ENCODE measurements at regions of chr22 and their contacts with region 1.

Region 1: DNA sequence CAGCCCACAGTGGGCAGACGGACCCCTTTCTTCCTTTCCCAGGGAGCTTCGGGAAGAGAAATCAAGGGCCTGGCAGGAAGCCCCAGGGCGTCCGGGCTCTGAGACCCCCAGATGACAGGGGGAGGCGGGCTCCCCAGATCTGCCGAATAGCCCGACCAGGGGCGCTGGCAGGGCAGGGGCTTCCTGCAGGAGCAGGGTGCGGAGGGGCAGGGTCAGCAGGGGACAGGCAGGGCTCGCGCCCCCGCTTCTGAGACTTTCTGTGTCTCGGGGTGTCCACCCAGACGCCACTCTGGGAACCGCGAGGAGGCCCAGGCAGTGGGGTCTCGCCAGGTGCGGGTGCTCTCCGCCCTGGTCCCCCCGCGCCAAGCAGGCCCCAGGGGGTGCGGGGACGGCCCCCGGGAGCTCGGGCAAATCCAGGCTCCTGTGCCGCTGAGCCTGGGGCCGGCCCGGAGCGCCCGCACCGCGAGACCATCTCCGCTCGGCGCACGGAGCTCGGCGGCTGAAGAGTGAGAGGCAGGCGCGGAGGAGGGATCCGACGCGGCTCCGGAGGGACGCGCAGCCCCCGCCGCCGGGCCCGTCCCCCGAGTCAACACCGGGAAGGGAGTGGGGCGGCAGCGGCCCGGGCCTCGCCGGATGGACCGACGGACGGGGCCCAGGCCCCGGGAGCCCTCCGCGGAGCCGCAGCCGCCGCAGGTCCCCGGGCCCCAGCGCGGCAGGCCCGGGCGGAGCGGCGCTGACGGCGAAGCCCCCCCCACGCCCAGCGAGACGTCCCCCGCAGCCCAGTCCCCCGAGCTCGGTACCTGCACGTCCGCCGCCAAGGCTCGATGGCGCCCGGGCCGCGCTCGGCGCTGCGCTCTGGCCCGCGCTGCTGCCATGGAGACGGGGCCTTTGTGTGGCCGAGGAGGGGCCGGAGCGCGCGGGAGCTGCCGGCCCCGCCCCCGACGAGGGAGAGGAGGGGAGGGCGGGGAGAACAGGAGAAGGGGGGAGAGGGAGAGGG is at the start of gene PLXNB2:
- DNase-seq: peak; percentile 72 to 76
- H3K4me3 ChIP-seq: peak within 1 kb of the TSS; percentile 88
- H3K27ac ChIP-seq: peak within 1 kb of the TSS; percentile 92
- H3K4me1 ChIP-seq: peaks cover 42% of the 10 kb centered on the region
- H3K27me3 ChIP-seq: no peaks in the 10 kb centered on the region
- CTCF ChIP-seq: no peak
- total RNA-seq, gene PLXNB2: 250 and 260 TPM in 2 replicates

Region 2: DNA sequence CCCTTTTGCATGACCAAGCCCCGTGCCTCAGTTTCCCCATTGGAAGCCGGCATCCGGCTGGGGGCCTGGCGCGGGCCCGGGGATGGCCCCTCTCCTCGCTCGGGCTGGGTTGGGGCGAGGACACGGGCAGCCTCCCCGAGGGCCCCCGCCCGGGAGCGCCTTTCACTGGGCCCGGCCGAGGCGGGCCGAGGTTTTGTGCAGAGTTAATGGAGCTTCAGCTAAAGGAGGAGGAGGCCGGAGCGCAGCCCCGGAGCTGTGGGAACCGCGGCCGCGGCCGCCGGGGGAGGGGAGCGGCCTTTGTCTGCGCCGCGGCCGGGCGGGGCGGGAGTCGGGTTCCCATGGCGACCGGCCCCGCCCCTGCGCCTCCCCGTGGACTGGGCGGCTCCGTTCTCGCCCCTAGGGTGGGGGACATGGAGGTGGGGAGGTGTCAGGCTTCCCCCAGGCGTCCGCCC is 35.5 kb before region 1 on chr22:
- CTCF ChIA-PET with region 1: interaction called, 8 read pairs
- POLR2A ChIA-PET with region 1: interaction called, 3 read pairs
- intact Hi-C with region 1: loop called (anchors 5 kb)
- DNase-seq: peak in 1 of 2 experiments; percentile 73
- H3K4me3 ChIP-seq: peak overlapping the region; percentile 82
- H3K27ac ChIP-seq: no peak overlapping the region
- H3K4me1 ChIP-seq: peaks cover 47% of the 10 kb centered on the region
- H3K27me3 ChIP-seq: no peaks in the 10 kb centered on the region
- CTCF ChIP-seq: 0 out of 2 replicates have a peak, but pooled peaks have one; percentile 30

Region 3: DNA sequence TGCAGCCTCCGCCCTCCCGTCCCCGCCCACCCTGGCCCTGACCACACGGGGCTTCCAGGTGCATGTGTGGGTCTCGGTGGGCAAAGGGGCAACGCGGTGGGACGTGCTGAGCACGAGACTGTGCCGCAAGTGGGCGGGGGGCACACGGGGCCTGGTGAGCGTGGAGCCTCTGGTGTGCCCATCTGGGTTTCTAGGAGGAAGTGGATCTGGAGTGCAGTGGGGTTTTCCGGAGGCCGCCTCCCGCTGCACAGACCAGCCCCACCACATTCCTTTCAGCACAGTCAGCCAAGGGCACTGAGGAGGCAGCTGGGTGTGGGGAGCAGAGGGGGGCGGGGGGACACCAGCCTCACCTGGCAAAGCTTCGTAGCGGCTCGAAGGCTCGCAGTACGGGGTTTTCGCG is 24.7 kb before region 1 on chr22:
- CTCF ChIA-PET with region 1: interaction called, 6 read pairs
- POLR2A ChIA-PET with region 1: no interaction called
- intact Hi-C with region 1: loop called (anchors 1 kb)
- DNase-seq: peak; percentile 93 to 99
- H3K4me3 ChIP-seq: peak overlapping the region; percentile 45
- H3K27ac ChIP-seq: peak overlapping the region; percentile 73
- H3K4me1 ChIP-seq: peaks cover 38% of the 10 kb centered on the region
- H3K27me3 ChIP-seq: no peaks in the 10 kb centered on the region
- CTCF ChIP-seq: no peak